ENCODE measurements at regions of chr9 and their contacts with region 1.

Region 1: GRCh38 chr9:80061940-80062339 is 490.2 kb downstream of the TLE4 start:
- DNase-seq: peak in 1 of 2 donors; percentile 48
- ATAC-seq: peak; percentile 81
- H3K4me3 ChIP-seq: no peak overlapping the region
- H3K27ac ChIP-seq: peak overlapping the region; percentile 82 to 95
- H3K4me1 ChIP-seq: peaks cover 4 to 7% of the 10 kb centered on the region in 2 donors
- H3K27me3 ChIP-seq: no peaks in the 10 kb centered on the region

Region 2: GRCh38 chr9:79571309-79572031 is 490.5 kb before region 1 on chr9 and contains the start of gene TLE4:
- intact Hi-C with region 1: loop called (anchors 5 kb)
- DNase-seq: peak; percentile 99 to 100
- ATAC-seq: peak; percentile 99
- H3K4me3 ChIP-seq: peak within 1 kb of the TSS; percentile 94 to 95
- H3K27ac ChIP-seq: peak within 1 kb of the TSS; percentile 81 to 95
- H3K4me1 ChIP-seq: no peaks in the 10 kb centered on the region
- H3K27me3 ChIP-seq: no peaks in the 10 kb centered on the region
- total RNA-seq, gene TLE4: 36.7 to 38.3 TPM